ENCODE measurements at regions of chr14 and their contacts with region 1.

Region 1: GRCh38 chr14:105020815-105021655 is at the start of gene CDCA4:
- DNase-seq: peak; percentile 88
- ATAC-seq: peak; percentile 91
- H3K4me3 ChIP-seq: peak within 1 kb of the TSS; percentile 69 to 86 (median 81)
- H3K27ac ChIP-seq: peak within 1 kb of the TSS; percentile 74
- H3K4me1 ChIP-seq: peaks cover 62% of the 10 kb centered on the region
- H3K27me3 ChIP-seq: no peaks in the 10 kb centered on the region; a peak in 1 of 5 replicates
- CTCF ChIP-seq: no peak; the same call in 1 of the 2 replicates
- EP300 ChIP-seq: no peak
- POLR2A ChIP-seq: peak; percentile 63 to 74; a peak in 3 of 4 replicates
- RAD21 ChIP-seq: peak; percentile 51; the same call in 1 of the 2 replicates
- total RNA-seq, gene CDCA4: 42.1 and 43.1 TPM in 2 replicates

Region 2: DNA sequence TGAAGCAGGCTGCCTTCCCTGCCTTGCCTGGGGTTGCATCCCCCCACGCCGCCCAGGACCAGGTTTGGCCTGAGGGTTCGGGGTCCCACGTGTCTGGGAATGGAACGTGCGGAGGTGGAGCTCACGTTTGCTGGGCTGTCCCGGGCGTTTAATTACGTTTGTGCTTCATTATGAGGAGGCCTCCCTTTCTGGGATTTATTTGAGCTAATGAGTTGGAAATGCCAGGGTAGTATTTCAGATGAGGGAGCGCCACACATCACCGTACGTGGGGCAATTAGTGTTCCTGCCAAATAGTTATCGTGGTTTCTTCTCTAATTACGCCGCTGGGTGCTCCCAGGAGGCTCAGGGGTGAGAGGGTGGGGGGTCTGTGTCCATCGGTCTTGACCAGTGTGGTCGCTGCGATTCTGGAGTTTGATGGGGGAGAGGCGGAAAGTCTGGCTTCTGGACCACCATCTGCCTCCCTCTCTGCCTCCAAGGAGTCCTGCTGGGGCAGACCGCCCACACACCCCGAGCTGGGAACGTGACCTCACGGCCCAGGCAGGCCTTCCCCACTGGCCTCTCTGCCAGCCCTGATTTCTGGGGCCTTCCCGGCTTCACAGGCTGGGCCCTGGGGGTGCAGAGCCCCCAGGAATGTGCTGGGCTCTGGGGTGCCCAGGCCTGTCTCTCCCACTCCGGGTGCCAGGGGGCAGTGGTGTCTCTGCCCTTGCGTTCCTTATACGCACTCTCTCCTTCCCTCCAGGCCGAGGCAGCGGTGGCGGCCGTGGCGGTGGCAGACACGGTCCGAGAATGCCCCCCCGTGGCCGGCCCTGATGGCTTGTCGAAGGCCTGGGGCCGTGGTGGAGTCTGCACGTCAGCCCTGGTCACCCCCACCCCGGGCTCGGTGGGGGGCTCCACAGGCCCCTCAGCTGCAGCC is 863.8 kb before region 1 on chr14:
- CTCF ChIA-PET with region 1: no interaction called
- POLR2A ChIA-PET with region 1: no interaction called
- in situ Hi-C with region 1: no loop called
- intact Hi-C with region 1: no loop called
- DNase-seq: peak; percentile 5
- ATAC-seq: peak; percentile 57
- H3K4me3 ChIP-seq: no peak overlapping the region
- H3K27ac ChIP-seq: no peak overlapping the region
- H3K4me1 ChIP-seq: no peaks in the 10 kb centered on the region
- H3K27me3 ChIP-seq: peaks cover 10 to 49% of the 10 kb centered on the region in 2 experiments; a peak in 4 of 5 replicates
- CTCF ChIP-seq: peak; percentile 42; the same call in 1 of the 2 replicates
- EP300 ChIP-seq: no peak
- POLR2A ChIP-seq: no peak
- RAD21 ChIP-seq: no peak

Region 3: DNA sequence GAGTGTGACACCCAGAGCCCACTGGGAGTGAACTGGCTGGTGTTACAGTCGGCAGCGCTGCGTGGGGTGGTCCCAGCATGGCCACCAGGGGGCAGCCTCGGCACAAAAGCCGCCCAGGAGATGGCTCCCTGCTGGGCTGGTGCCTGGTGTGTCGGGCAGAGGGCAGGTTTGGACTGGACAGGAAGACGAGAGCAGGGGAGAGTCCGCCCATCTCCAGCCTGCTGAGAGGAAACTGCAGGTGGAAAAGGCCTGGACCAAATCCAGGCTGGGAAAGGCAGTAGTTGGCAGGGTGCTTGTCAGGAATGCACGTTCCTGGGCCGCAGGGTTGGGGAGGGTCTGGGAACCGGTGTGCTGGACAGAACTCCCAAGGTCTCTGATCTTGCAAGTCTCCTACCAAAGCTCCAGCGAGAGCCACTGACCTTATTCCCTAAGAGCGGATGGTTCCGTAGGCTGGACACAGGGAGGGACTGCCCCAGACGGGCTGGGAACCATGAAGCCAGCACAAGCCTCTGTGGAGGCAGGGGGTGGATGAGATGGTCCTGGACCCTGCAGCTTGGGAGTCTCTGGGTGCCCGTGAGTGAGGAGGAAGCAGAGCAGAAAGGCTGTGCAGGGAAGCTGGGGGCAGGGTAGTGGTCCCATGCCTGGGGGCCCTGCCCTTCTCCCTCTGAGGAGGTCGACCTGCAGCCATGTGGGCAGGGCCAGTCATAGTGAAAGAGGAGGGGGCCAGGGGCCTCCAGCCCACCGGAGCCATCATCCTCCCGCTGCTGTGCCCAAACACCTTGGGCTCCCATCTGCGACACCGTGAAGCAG is 44.6 kb before region 1 on chr14:
- CTCF ChIA-PET with region 1: no interaction called
- POLR2A ChIA-PET with region 1: interaction called, 5 read pairs
- in situ Hi-C with region 1: no loop called
- intact Hi-C with region 1: loop called (anchors 5 kb)
- DNase-seq: peak; percentile 66
- ATAC-seq: peak; percentile 74
- H3K4me3 ChIP-seq: peak overlapping the region in 1 of 3 experiments; percentile 42; a peak in 1 of 6 replicates
- H3K27ac ChIP-seq: no peak overlapping the region
- H3K4me1 ChIP-seq: peaks cover 53% of the 10 kb centered on the region
- H3K27me3 ChIP-seq: peaks cover 12 to 82% of the 10 kb centered on the region in 2 experiments
- CTCF ChIP-seq: peak; percentile 97
- EP300 ChIP-seq: no peak
- POLR2A ChIP-seq: no peak
- RAD21 ChIP-seq: peak; percentile 96

Region 4: GRCh38 chr14:104985675-104986525 is 35.1 kb before region 1 on chr14 and contains the start of gene CLBA1:
- CTCF ChIA-PET with region 1: no interaction called
- POLR2A ChIA-PET with region 1: interaction called, 18 read pairs
- in situ Hi-C with region 1: no loop called
- intact Hi-C with region 1: no loop called
- DNase-seq: peak; percentile 69
- ATAC-seq: peak; percentile 87
- H3K4me3 ChIP-seq: peak within 1 kb of the TSS; percentile 62 to 83 (median 79)
- H3K27ac ChIP-seq: no peak within 1 kb of the TSS
- H3K4me1 ChIP-seq: peaks cover 31% of the 10 kb centered on the region
- H3K27me3 ChIP-seq: peaks cover 14 to 40% of the 10 kb centered on the region in 2 experiments; a peak in 4 of 5 replicates
- CTCF ChIP-seq: no peak
- EP300 ChIP-seq: no peak
- POLR2A ChIP-seq: 0 out of 4 replicates have a peak, but pooled peaks of 1 of the 2 experiments have one; percentile 1
- RAD21 ChIP-seq: no peak
- total RNA-seq, gene CLBA1: 1.4 and 1.5 TPM in 2 replicates

Measured in HepG2 (cell line).